ENCODE measurements at regions of chr9 and their contacts with region 1.

Region 1: GRCh38 chr9:116717150-116717549 is 30.0 kb downstream of the TRIM32 start:
- DNase-seq: no peak
- H3K4me3 ChIP-seq: no peak overlapping the region
- H3K27ac ChIP-seq: no peak overlapping the region
- H3K4me1 ChIP-seq: no peaks in the 10 kb centered on the region
- H3K27me3 ChIP-seq: no peaks in the 10 kb centered on the region
- CTCF ChIP-seq: no peak

Region 2: GRCh38 chr9:116774421-116775180 is 57.5 kb after region 1 on chr9:
- intact Hi-C with region 1: loop called (anchors 10 kb)
- DNase-seq: no peak
- H3K4me3 ChIP-seq: no peak overlapping the region
- H3K27ac ChIP-seq: no peak overlapping the region
- H3K4me1 ChIP-seq: no peaks in the 10 kb centered on the region
- H3K27me3 ChIP-seq: no peaks in the 10 kb centered on the region
- CTCF ChIP-seq: no peak